ENCODE measurements at regions of chr1 and their contacts with region 1.

Region 1: GRCh38 chr1:35564037-35564883 is 6.7 kb downstream of the NCDN start:
- DNase-seq: peak; percentile 71
- H3K4me3 ChIP-seq: no peak overlapping the region
- H3K27ac ChIP-seq: no peak overlapping the region
- H3K4me1 ChIP-seq: peaks cover 7% of the 10 kb centered on the region
- H3K27me3 ChIP-seq: no peaks in the 10 kb centered on the region
- CTCF ChIP-seq: peak; percentile 59 to 76 (median 76)
- POLR2A ChIP-seq: no peak

Region 2: GRCh38 chr1:35544978-35545377 is 19.3 kb before region 1 on chr1:
- intact Hi-C with region 1: no loop called
- DNase-seq: no peak
- H3K4me3 ChIP-seq: no peak overlapping the region
- H3K27ac ChIP-seq: no peak overlapping the region
- H3K4me1 ChIP-seq: no peaks in the 10 kb centered on the region
- H3K27me3 ChIP-seq: no peaks in the 10 kb centered on the region
- CTCF ChIP-seq: peak in 1 of 4 experiments; percentile 11
- POLR2A ChIP-seq: no peak

Region 3: DNA sequence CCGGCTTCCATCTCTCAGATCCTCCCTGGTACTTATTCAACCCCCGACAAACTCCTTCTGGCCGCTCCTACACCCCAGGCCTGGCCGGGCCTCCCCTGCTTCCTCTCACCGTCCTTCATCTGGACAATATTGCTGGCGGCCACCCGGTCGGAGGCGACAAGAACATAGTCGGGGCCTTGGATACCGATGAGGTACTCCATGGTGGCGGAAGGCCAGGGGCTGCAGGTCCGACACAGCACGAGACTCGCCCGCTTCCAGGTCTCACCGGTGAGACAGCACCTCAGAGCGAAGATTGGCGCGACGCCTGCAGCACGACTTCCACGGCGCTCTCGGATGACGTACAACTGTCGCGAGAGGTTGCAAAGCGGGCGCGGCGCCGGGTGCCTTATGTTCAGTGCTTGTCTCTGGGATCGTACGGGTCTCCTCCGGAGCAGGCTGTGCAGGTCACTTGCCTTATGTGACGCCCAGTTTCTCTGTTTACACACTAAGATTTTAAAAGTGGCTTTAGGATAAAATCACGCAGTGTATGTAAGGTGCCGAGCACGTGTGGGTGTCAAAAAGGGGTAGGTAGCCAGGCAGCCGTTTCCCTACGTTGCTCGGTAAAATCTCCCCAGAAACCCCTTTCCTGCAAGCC is 77.1 kb after region 1 on chr1 and contains the start of gene PSMB2:
- intact Hi-C with region 1: no loop called
- DNase-seq: peak; percentile 95
- H3K4me3 ChIP-seq: peak within 1 kb of the TSS; percentile 60 to 79
- H3K27ac ChIP-seq: peak within 1 kb of the TSS; percentile 88
- H3K4me1 ChIP-seq: peaks cover 4% of the 10 kb centered on the region
- H3K27me3 ChIP-seq: no peaks in the 10 kb centered on the region
- CTCF ChIP-seq: no peak
- POLR2A ChIP-seq: peak; percentile 62
- total RNA-seq, gene PSMB2: 53.6 to 64.8 TPM

Region 4: DNA sequence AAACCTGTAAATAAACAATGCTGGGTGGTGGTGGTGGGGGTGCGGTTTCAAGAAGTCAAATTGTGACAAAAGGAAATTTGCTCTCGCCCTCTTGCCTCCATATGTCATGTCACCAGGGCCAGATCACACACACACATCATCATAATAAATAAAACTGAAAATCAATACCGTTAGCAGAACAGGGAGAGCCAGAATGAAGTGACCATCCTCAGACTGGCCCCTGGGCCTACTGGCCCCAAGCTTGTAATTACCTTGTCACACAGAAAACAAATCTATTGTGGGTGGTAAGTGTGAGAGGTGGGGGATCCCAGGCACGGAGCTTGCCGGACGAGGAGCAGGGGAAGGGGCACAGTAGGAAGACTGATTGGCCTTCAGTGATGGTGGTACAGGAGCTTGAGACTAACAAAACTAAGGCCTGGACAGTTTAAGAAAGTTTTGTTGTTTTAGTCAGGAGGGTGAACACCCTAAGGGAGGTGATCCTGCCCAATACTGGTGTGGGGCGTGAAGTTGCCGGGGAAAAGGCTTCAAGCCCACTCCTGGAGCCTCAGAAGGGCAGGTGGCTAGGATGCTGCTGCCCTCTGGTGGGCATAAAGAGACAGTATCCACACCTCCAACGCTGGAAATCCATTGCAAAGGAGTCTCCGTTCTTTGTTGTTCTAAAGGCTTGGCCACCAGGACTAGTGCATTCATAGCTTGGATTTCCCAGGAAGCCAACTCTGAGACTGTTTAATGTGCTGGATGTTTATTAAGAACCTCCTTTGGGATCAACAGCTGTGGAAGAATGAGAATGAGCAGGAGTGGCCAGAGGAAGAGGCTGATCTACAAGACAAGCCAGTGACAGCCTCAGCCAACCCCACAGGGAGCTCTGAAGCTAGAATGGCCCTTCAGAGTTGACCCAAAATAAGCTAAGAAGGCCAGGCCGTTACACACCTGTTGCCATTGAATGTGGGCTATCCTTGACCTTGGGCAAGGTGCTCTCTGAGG is 162.5 kb after region 1 on chr1:
- intact Hi-C with region 1: loop called (anchors 2 kb)
- DNase-seq: peak; percentile 50
- H3K4me3 ChIP-seq: no peak overlapping the region
- H3K27ac ChIP-seq: no peak overlapping the region
- H3K4me1 ChIP-seq: no peaks in the 10 kb centered on the region
- H3K27me3 ChIP-seq: no peaks in the 10 kb centered on the region
- CTCF ChIP-seq: peak; percentile 68 to 85 (median 74)
- POLR2A ChIP-seq: no peak

Region 5: GRCh38 chr1:35769759-35770446 is 205.6 kb after region 1 on chr1 and contains the start of gene CLSPN:
- intact Hi-C with region 1: loop called (anchors 2 kb)
- DNase-seq: peak; percentile 94
- H3K4me3 ChIP-seq: peak within 1 kb of the TSS; percentile 57 to 72
- H3K27ac ChIP-seq: peak within 1 kb of the TSS; percentile 57 to 59
- H3K4me1 ChIP-seq: no peaks in the 10 kb centered on the region
- H3K27me3 ChIP-seq: no peaks in the 10 kb centered on the region
- CTCF ChIP-seq: no peak
- POLR2A ChIP-seq: peak; percentile 48
- total RNA-seq, gene CLSPN: 0.73 to 3.4 TPM